ENCODE measurements at regions of chr4 and their contacts with region 1.

Region 1: GRCh38 chr4:173019711-173020110 is 148.9 kb upstream of the GALNT7 start:
- DNase-seq: no peak
- CTCF ChIP-seq: no peak

Region 2: GRCh38 chr4:173257732-173258717 is 238.3 kb after region 1 on chr4:
- in situ Hi-C with region 1: loop called (anchors 5 kb)
- DNase-seq: peak; percentile 41
- CTCF ChIP-seq: peak; percentile 80

Measured in GM13976 (cell line).